Activated T-helper 2 cell treated with anti-CD3 and anti-CD28 coated beads, Interferon-gamma antibody, Interleukin-2, Interleukin-4, amounts not matched to agents 10 μg/mL and 5 μg/mL and 100 μg/mL, durations not matched to agents 14 hours and 24 hours and 36 hours (primary cell): ENCODE measurements at regions of chr2 and their contacts with region 1.

Region 1: DNA sequence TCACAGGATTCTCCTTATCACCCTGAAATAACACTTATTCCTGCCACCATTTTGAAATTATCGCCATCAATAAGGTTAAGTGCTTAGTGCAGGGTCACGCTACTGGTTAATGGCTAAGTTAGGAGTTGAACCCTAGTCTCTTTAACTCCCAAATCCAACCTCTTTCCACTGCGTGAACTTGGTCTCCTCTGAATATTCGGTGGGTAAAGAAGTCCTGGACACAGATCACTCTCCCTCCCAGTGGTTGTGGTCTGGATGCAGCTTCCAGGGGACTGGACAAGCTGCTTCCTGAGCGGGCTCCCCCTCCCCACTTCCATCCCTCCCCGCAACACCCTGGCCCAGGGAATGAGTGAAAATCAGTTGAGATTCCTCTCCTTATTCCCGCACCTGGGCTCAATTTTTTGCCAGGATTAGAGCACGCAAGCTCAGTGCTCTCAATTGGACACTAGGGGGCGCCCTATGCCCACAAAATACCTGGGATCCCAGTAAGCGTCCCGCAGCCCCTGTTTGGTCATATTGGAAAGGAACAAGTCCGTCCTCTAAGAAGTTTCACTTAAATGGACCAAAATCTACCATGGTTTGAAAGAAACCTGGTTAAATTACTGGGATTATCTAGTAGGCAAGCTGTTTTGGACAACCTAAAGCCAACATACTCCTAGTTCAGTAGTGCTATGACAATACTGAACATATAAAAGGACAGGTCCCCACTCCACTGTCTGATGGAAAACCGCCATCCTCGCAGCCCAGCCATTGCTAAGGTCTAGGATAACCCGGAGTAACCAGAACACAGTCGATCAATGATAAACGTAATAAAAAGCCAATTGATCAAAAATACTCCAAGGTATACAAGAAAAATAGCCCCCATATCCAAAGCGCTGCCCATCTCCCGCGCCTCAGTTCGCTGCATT is 40.4 kb downstream of the DHRS9 start:
- DNase-seq: peak; percentile 60
- H3K4me3 Mint-ChIP-seq: no peak overlapping the region
- H3K27ac Mint-ChIP-seq: no peak overlapping the region
- H3K4me1 Mint-ChIP-seq: peaks cover 44% of the 10 kb centered on the region
- H3K27me3 Mint-ChIP-seq: peaks cover 1% of the 10 kb centered on the region

Region 2: GRCh38 chr2:168961450-168962229 is 148.1 kb before region 1 on chr2:
- intact Hi-C with region 1: loop called (anchors 2 kb)
- DNase-seq: no peak
- H3K4me3 Mint-ChIP-seq: no peak overlapping the region
- H3K27ac Mint-ChIP-seq: no peak overlapping the region
- H3K4me1 Mint-ChIP-seq: peaks cover 33% of the 10 kb centered on the region
- H3K27me3 Mint-ChIP-seq: peaks cover 10% of the 10 kb centered on the region

Region 3: DNA sequence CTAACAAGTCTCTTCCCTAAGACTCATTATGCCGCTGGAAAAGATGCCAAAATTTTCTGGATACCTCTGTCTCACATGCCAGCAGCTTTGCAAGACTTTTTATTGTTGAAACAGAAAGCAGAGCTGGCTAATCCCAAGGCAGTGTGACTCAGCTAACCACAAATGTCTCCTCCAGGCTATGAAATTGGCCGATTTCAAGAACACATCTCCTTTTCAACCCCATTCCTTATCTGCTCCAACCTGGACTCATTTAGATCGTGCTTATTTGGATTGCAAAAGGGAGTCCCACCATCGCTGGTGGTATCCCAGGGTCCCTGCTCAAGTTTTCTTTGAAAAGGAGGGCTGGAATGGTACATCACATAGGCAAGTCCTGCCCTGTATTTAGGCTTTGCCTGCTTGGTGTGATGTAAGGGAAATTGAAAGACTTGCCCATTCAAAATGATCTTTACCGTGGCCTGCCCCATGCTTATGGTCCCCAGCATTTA is 14.1 kb before region 1 on chr2:
- intact Hi-C with region 1: loop called (anchors 1 kb)
- DNase-seq: peak; percentile 15
- H3K4me3 Mint-ChIP-seq: peak overlapping the region; percentile 9
- H3K27ac Mint-ChIP-seq: peak overlapping the region; percentile 73
- H3K4me1 Mint-ChIP-seq: peaks cover 39% of the 10 kb centered on the region
- H3K27me3 Mint-ChIP-seq: no peaks in the 10 kb centered on the region

Region 4: DNA sequence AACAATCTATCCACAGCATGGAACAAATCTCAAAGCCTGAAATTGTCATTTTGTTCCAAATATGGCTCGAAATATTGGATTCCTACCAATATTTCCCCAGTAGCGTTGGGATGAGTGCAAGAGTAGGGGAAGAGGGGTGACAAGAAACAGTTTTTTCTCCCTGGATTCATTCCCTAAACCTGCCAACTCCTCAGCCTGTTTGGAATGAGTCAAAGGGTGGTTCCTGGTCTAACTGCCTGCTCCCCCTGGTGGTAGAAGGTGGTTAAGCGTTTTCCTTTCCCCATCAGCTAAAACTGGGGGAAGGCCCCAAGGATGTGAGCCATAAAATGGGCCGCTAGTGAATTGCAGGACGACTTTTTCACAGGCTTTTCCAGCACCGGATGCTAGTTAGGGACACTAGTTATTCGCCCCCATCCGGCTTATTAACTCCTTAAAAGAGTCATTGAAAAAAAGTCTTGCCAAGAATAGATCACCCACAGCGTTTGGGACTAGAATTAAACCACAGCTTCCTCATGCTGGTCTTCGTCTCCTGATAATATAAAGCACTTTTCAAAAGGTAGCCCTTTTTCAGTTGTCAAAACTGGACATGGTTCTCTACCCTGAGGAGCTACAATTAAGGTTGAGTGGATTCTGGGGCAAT is 32.1 kb after region 1 on chr2:
- intact Hi-C with region 1: loop called (anchors 2 kb)
- DNase-seq: peak; percentile 26
- H3K4me3 Mint-ChIP-seq: no peak overlapping the region
- H3K27ac Mint-ChIP-seq: no peak overlapping the region
- H3K4me1 Mint-ChIP-seq: no peaks in the 10 kb centered on the region
- H3K27me3 Mint-ChIP-seq: peaks cover 4% of the 10 kb centered on the region